ENCODE measurements at regions of chr19 and their contacts with region 1.

Region 1: DNA sequence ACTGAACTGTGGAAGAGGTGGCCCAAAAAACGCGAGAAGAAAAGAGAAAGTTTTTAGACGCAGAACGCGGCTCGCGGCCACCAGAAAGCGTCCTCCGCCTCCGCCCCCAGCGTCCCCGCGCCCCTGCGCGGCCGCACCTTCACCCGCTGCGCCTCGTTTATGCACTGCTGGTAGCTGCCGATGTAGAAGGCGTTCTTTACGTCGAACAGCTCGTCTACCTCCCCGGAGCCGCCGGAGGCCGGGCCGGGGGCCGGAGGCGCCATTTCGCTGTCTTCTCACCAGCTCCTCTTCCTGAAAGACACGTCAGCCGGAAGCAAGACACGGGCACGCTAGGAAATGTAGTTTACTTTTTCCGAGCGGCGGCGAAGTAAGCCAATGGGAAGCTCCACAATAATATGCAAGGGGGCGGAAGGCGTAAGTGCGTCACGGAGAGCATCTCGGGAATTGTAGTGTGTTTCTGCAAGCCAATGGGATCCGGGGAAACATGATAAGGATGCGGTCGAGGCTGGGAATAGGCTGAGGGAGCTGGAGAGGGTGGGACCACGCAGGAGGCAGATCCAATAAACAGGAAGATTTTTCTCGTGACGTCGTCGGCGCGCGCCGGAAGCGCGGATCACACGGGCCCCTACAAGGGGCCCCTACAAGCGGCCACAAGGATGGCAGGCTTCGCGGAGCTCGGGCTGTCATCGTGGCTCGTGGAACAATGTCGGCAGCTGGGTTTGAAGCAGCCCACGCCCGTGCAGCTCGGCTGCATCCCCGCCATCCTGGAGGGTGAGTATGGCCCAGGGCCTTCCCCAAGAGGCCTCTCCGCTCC is at the starts of genes COPE and DDX49:
- DNase-seq: peak; percentile 99
- ATAC-seq: peak; percentile 99 to 100
- H3K4me3 ChIP-seq: peak within 1 kb of the TSS; percentile 88 to 99 (median 97)
- H3K27ac ChIP-seq: peak within 1 kb of the TSS; percentile 83 to 93 (median 88)
- H3K4me1 ChIP-seq: peaks cover 23% of the 10 kb centered on the region in 2 donors
- H3K27me3 ChIP-seq: no peaks in the 10 kb centered on the region
- CTCF ChIP-seq: no peak
- POLR2A ChIP-seq: peak; percentile 78 to 83
- total RNA-seq, gene COPE: 169 to 229 (median 203) TPM
- total RNA-seq, gene DDX49: 40.6 to 60.1 (median 44.2) TPM

Region 2: DNA sequence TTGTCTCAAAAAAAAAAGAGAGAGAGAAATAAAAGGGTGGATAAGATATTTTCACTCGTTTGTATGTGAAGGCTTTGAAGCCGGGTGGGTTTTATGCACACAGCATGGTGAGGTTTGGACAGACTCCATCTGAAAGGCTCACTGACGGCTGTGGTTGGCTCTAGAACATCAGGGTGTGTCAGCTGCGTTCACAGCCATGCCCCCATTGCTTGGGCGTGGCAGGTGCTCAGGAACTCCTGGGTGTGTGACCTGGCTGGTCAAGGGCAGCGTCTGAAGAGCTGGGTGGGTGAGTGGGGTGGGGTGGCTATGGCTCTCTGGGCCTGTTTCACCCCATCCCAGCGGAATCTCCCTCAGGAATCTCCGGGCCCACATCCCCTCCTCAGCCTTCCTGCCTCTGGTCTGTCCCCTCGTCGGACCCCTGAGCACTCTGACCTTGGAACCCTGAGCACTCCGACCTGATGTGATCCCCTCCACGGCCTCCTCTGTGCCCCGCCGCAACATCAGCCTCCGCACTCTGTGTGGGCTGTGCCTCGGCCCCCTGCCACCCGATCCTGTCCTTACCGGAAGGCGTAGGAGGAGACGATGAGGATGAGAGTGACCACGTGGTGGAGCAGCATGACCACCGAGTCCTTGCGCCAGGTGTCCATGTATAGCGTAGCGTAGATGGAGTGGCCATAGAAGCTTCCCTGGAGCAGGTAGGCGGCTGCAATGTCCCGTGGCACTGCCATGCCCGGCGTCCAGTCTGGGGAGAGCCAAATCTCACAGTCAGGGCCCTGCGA is 35.6 kb before region 1 on chr19:
- in situ Hi-C with region 1: no loop called
- intact Hi-C with region 1: no loop called
- DNase-seq: no peak
- ATAC-seq: no peak
- H3K4me3 ChIP-seq: no peak overlapping the region
- H3K27ac ChIP-seq: no peak overlapping the region
- H3K4me1 ChIP-seq: no peaks in the 10 kb centered on the region
- H3K27me3 ChIP-seq: no peaks in the 10 kb centered on the region
- CTCF ChIP-seq: no peak
- POLR2A ChIP-seq: no peak

Region 3: GRCh38 chr19:18895038-18895823 is 24.1 kb before region 1 on chr19:
- in situ Hi-C with region 1: no loop called
- intact Hi-C with region 1: loop called (anchors 2 kb)
- DNase-seq: peak; percentile 33 to 68
- ATAC-seq: peak; percentile 72 to 73
- H3K4me3 ChIP-seq: peak overlapping the region; percentile 55 to 71 (median 58)
- H3K27ac ChIP-seq: peak overlapping the region; percentile 16 to 74 (median 46)
- H3K4me1 ChIP-seq: peaks cover 8 to 31% of the 10 kb centered on the region in 2 donors
- H3K27me3 ChIP-seq: no peaks in the 10 kb centered on the region
- CTCF ChIP-seq: peak in 4 of 5 experiments; percentile 41 to 57 (median 54)
- POLR2A ChIP-seq: peak in 1 of 2 donors; percentile 0

Region 4: GRCh38 chr19:18940769-18941407 is 21.6 kb after region 1 on chr19 and contains the start of gene HOMER3:
- in situ Hi-C with region 1: no loop called
- intact Hi-C with region 1: loop called (anchors 1 kb)
- DNase-seq: peak; percentile 57 to 74
- ATAC-seq: peak; percentile 67 to 78
- H3K4me3 ChIP-seq: peak within 1 kb of the TSS; percentile 67 to 93 (median 78)
- H3K27ac ChIP-seq: peak within 1 kb of the TSS; percentile 87 to 98 (median 94)
- H3K4me1 ChIP-seq: peaks cover 12 to 18% of the 10 kb centered on the region in 2 donors
- H3K27me3 ChIP-seq: no peaks in the 10 kb centered on the region
- CTCF ChIP-seq: peak in 2 of 5 experiments; percentile 42 to 65
- POLR2A ChIP-seq: peak; percentile 61 to 70
- total RNA-seq, gene HOMER3: 86.2 to 202 (median 113) TPM

Region 5: DNA sequence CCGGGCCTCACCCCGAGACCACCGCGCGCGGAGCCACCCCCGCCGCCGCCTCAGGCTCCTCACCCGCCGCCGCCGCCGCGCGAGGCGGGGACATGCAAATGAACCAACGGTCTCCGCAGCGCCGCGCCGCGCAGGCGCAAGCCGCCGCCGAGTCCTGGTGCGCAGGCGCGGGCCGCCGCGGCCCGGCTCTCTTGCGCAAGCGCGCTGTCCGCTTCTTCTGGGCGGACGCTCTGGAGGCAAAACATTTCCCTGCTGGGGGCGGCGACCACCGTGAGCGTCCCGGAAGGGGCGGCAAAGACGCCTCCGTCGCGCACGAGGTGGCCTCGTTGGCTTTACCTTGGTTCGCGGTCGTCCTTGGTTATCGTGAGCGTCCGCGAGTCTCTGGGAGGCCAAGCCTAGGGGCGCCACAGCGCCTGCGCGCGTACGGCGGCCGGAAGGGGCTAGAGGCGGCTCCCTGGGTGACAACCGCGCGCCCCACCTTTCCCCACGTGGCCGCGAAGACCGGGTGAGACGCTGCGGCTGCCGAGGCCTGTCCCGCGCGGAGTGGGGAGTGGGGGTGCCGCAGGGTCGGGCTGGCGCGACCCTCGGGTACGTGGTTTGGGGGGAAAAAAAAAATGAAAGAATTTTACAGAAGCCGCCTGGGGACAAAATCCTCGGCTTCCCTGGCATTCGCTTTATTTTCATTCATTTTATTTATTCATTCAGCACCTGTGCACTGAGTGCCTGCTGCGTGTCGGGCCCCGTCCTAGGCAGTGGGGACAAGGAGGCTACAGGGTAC is 114.3 kb after region 1 on chr19 and contains the starts of genes ARMC6 and SUGP2:
- in situ Hi-C with region 1: no loop called
- intact Hi-C with region 1: loop called (anchors 1 kb)
- DNase-seq: peak; percentile 62 to 80
- ATAC-seq: peak; percentile 88 to 91
- H3K4me3 ChIP-seq: peak within 1 kb of the TSS; percentile 69 to 96 (median 73)
- H3K27ac ChIP-seq: peak within 1 kb of the TSS; percentile 89 to 100 (median 94)
- H3K4me1 ChIP-seq: peaks cover 22 to 40% of the 10 kb centered on the region in 2 donors
- H3K27me3 ChIP-seq: no peaks in the 10 kb centered on the region
- CTCF ChIP-seq: peak in 3 of 5 experiments; percentile 19 to 46 (median 39)
- POLR2A ChIP-seq: peak; percentile 80 to 83
- total RNA-seq, gene ARMC6: 18.2 to 35.7 (median 25.2) TPM
- total RNA-seq, gene SUGP2: 24.6 to 38.2 (median 32.8) TPM

Region 6: GRCh38 chr19:19232261-19232721 is 313.0 kb after region 1 on chr19:
- in situ Hi-C with region 1: no loop called
- intact Hi-C with region 1: no loop called
- DNase-seq: no peak
- ATAC-seq: no peak
- H3K4me3 ChIP-seq: no peak overlapping the region
- H3K27ac ChIP-seq: no peak overlapping the region
- H3K4me1 ChIP-seq: no peaks in the 10 kb centered on the region
- H3K27me3 ChIP-seq: peaks cover 13 to 39% (median 19%) of the 10 kb centered on the region in 3 donors
- CTCF ChIP-seq: no peak
- POLR2A ChIP-seq: no peak

Measured in gastrocnemius medialis (tissue), 4 donors.